Activated CD4-positive, alpha-beta memory T cell treated with anti-CD3 and anti-CD28 coated beads for 36 hours (primary cell): ENCODE measurements at regions of chr9 and their contacts with region 1.

Region 1: GRCh38 chr9:31272456-31273295 is 1111.8 kb upstream of the ACO1 start:
- DNase-seq: peak; percentile 69
- H3K4me3 Mint-ChIP-seq: no peak overlapping the region
- H3K27ac Mint-ChIP-seq: no peak overlapping the region
- H3K4me1 Mint-ChIP-seq: peaks cover 10% of the 10 kb centered on the region
- H3K27me3 Mint-ChIP-seq: no peaks in the 10 kb centered on the region

Region 2: GRCh38 chr9:31259824-31260223 is 12.9 kb before region 1 on chr9:
- CTCF ChIA-PET with region 1: no interaction called
- POLR2A ChIA-PET with region 1: no interaction called
- intact Hi-C with region 1: loop called (anchors 2 kb)
- DNase-seq: no peak
- H3K4me3 Mint-ChIP-seq: no peak overlapping the region
- H3K27ac Mint-ChIP-seq: no peak overlapping the region
- H3K4me1 Mint-ChIP-seq: peaks cover 10% of the 10 kb centered on the region
- H3K27me3 Mint-ChIP-seq: no peaks in the 10 kb centered on the region